HEK293 (cell line): ENCODE measurements at regions of chr10 and their contacts with region 1.

Region 1: GRCh38 chr10:113454341-113455061 is 98.4 kb upstream of the HABP2 start:
- H3K4me3 ChIP-seq: no peak overlapping the region
- H3K27ac ChIP-seq: no peak overlapping the region
- H3K4me1 ChIP-seq: no peaks in the 10 kb centered on the region
- CTCF ChIP-seq: peak; percentile 71

Region 2: GRCh38 chr10:113441220-113441619 is 13.3 kb before region 1 on chr10:
- CTCF ChIA-PET with region 1: interaction called, 39 read pairs
- POLR2A ChIA-PET with region 1: no interaction called
- H3K4me3 ChIP-seq: no peak overlapping the region
- H3K27ac ChIP-seq: no peak overlapping the region
- H3K4me1 ChIP-seq: no peaks in the 10 kb centered on the region
- CTCF ChIP-seq: no peak